ENCODE measurements at regions of chr1 and their contacts with region 1.

Region 1: DNA sequence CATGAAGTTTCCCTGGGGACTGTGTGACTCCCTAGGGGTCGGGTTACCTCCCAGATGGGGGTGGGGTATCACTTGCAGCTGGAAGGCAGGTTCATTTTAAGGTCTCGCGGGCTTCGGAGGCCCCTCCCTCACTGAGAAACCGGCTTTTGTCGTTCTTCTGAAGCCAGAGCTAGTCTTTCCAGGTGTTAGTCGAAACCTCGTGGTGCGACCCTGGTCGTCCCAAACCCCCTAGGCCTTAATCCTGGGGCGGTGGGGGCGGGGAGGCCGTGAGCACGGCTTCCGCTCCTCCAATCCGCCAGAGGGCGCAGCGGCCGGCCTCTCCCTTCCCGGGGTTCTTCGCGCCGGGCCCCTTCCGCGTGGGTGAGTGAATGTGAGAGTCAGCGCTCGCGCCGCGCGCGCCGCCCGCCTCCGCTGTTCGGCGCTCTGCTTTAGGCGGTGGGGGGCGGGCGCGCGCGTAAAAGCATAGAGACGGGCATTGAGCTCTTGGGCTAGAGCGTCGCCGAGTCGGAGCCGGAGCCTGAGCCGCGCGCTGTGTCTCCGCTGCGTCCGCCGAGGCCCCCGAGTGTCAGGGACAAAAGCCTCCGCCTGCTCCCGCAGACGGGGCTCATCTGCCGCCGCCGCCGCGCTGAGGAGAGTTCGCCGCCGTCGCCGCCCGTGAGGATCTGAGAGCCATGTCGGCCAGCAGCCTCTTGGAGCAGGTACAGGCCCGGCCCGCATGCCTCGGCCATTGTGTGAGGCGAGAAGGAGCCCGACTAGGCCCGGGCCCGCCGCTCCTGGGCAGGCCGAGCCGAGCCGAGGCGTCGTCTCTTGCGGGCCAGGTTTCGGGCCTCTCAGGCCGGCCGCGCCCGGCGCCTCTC is at the start of gene YTHDF2:
- DNase-seq: peak; percentile 96 to 99 (median 98)
- ATAC-seq: peak; percentile 92
- H3K4me3 ChIP-seq: peak within 1 kb of the TSS; percentile 89
- H3K4me3 Mint-ChIP-seq: peak within 1 kb of the TSS; percentile 97
- H3K27ac ChIP-seq: peak within 1 kb of the TSS; percentile 84 to 96
- H3K27ac Mint-ChIP-seq: peak within 1 kb of the TSS; percentile 96
- H3K4me1 ChIP-seq: peaks cover 42% of the 10 kb centered on the region
- H3K4me1 Mint-ChIP-seq: peaks cover 32% of the 10 kb centered on the region
- H3K27me3 ChIP-seq: no peaks in the 10 kb centered on the region
- H3K27me3 Mint-ChIP-seq: no peaks in the 10 kb centered on the region
- CTCF ChIP-seq: peak; percentile 80
- total RNA-seq, gene YTHDF2: 95.3 to 101 TPM

Region 2: GRCh38 chr1:27321813-27322577 is 1414.7 kb before region 1 on chr1 and contains the start of gene TMEM222:
- CTCF ChIA-PET with region 1: no interaction called
- POLR2A ChIA-PET with region 1: no interaction called
- intact Hi-C with region 1: loop called in 1 of 2 experiments (anchors 5 kb)
- DNase-seq: peak; percentile 95 to 99 (median 97)
- ATAC-seq: peak; percentile 93
- H3K4me3 ChIP-seq: peak within 1 kb of the TSS; percentile 95 to 99
- H3K4me3 Mint-ChIP-seq: peak within 1 kb of the TSS; percentile 98
- H3K27ac ChIP-seq: peak within 1 kb of the TSS; percentile 88 to 95
- H3K27ac Mint-ChIP-seq: peak within 1 kb of the TSS; percentile 97
- H3K4me1 ChIP-seq: peaks cover 40% of the 10 kb centered on the region
- H3K4me1 Mint-ChIP-seq: peaks cover 48% of the 10 kb centered on the region
- H3K27me3 ChIP-seq: no peaks in the 10 kb centered on the region
- H3K27me3 Mint-ChIP-seq: no peaks in the 10 kb centered on the region
- CTCF ChIP-seq: no peak
- total RNA-seq, gene TMEM222: 24.1 to 25.2 TPM

Region 3: DNA sequence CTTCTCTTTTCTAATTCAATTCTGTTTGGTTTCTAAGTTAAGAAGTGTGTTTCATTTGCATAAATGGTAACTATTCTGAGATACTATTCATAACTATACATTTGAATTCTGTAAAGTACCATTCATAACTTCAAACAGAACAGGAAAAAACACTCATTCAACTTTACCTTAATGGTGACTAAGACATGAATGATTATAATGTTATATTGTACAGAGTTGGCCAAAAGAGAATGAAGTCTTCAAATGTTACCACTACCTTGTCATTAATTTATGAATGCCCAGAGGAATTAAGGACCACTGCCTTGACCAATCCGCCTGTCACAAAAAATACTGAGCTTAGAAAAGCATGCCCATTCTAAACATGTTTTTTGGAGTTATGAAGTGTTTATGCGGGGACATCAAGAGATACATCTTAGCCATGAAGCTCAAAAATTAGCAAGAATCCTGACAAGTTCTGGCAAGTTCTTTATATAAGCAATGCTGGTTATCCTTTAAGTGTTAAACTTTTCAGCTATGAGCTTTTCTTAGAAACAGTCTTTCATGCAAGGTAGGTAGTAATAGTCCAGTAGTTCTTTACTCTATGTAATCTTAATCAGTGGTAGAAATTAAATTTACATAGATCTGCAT is 1254.6 kb before region 1 on chr1:
- CTCF ChIA-PET with region 1: no interaction called
- POLR2A ChIA-PET with region 1: no interaction called
- intact Hi-C with region 1: no loop called
- DNase-seq: no peak
- ATAC-seq: no peak
- H3K4me3 ChIP-seq: no peak overlapping the region
- H3K4me3 Mint-ChIP-seq: no peak overlapping the region
- H3K27ac ChIP-seq: no peak overlapping the region
- H3K27ac Mint-ChIP-seq: peak overlapping the region; percentile 75
- H3K4me1 ChIP-seq: peaks cover 15% of the 10 kb centered on the region
- H3K4me1 Mint-ChIP-seq: peaks cover 51% of the 10 kb centered on the region
- H3K27me3 ChIP-seq: no peaks in the 10 kb centered on the region
- H3K27me3 Mint-ChIP-seq: no peaks in the 10 kb centered on the region
- CTCF ChIP-seq: no peak

Region 4: GRCh38 chr1:28235755-28236655 is 500.7 kb before region 1 on chr1 and contains the start of gene ATP5IF1:
- CTCF ChIA-PET with region 1: no interaction called
- POLR2A ChIA-PET with region 1: no interaction called
- intact Hi-C with region 1: loop called in 1 of 2 experiments (anchors 5 kb)
- DNase-seq: peak; percentile 90 to 98 (median 94)
- ATAC-seq: peak; percentile 95
- H3K4me3 ChIP-seq: peak within 1 kb of the TSS; percentile 80 to 96
- H3K4me3 Mint-ChIP-seq: no peak within 1 kb of the TSS
- H3K27ac ChIP-seq: peak within 1 kb of the TSS; percentile 84 to 96
- H3K27ac Mint-ChIP-seq: no peak within 1 kb of the TSS
- H3K4me1 ChIP-seq: peaks cover 41% of the 10 kb centered on the region
- H3K4me1 Mint-ChIP-seq: peaks cover 21% of the 10 kb centered on the region
- H3K27me3 ChIP-seq: no peaks in the 10 kb centered on the region
- H3K27me3 Mint-ChIP-seq: no peaks in the 10 kb centered on the region
- CTCF ChIP-seq: no peak
- total RNA-seq, gene ATP5IF1: 66.1 to 69.3 TPM

Region 5: DNA sequence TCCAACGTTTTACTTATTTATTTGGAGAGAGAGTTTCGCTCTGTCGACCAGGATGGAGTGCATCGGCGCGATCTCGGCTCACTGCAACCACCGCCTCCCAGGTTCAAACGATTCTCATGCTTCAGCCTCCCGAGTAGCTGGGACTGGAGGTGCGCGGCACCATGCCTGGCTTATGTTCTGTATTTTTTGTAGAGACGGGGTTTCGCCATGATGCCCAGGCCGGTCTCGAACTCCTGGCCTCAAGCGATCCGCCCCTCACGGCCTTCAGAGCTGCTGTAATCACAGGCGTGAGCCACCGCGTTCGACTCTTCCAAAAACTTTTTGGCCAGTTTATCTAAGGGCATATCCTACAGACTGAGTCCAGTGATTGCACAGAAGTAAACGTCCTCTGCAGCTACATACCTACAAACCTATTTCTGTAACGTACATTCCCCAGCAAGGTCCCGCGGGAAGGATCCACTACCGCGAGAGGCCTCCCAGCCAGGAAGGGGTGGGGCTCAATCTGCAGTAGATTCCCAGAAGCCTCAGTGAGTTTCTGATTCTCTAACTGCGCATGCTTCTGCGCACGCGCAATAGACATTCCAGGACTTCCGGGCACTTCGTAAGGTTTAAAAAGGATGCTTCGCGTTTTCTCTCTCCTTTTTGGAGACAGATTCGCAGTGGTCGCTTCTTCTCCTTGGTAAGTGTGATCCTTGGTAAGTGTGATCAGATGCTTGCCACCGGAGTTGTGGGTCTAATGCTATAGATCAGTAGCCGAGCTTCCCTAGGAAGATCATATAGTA is 231.1 kb before region 1 on chr1 and contains the start of gene RCC1:
- CTCF ChIA-PET with region 1: no interaction called
- POLR2A ChIA-PET with region 1: interaction called, 3 read pairs
- intact Hi-C with region 1: loop called (anchors 1 to 2 kb)
- DNase-seq: peak; percentile 89 to 99 (median 94)
- ATAC-seq: peak; percentile 91
- H3K4me3 ChIP-seq: peak within 1 kb of the TSS; percentile 82 to 88
- H3K4me3 Mint-ChIP-seq: peak within 1 kb of the TSS; percentile 95
- H3K27ac ChIP-seq: peak within 1 kb of the TSS; percentile 77 to 85
- H3K27ac Mint-ChIP-seq: peak within 1 kb of the TSS; percentile 94
- H3K4me1 ChIP-seq: peaks cover 31% of the 10 kb centered on the region
- H3K4me1 Mint-ChIP-seq: peaks cover 45% of the 10 kb centered on the region
- H3K27me3 ChIP-seq: no peaks in the 10 kb centered on the region
- H3K27me3 Mint-ChIP-seq: no peaks in the 10 kb centered on the region
- CTCF ChIP-seq: no peak
- total RNA-seq, gene RCC1: 12.5 to 14.4 TPM

Region 6: GRCh38 chr1:28642847-28643635 is 93.6 kb before region 1 on chr1 and contains the start of gene TAF12:
- CTCF ChIA-PET with region 1: interaction called, 16 read pairs
- POLR2A ChIA-PET with region 1: interaction called, 53 read pairs
- intact Hi-C with region 1: loop called (anchors 1 kb)
- DNase-seq: peak; percentile 87 to 98 (median 91)
- ATAC-seq: peak; percentile 79
- H3K4me3 ChIP-seq: peak within 1 kb of the TSS; percentile 62 to 92
- H3K4me3 Mint-ChIP-seq: peak within 1 kb of the TSS; percentile 100
- H3K27ac ChIP-seq: peak within 1 kb of the TSS; percentile 88 to 90
- H3K27ac Mint-ChIP-seq: peak within 1 kb of the TSS; percentile 99
- H3K4me1 ChIP-seq: peaks cover 34% of the 10 kb centered on the region
- H3K4me1 Mint-ChIP-seq: peaks cover 54% of the 10 kb centered on the region
- H3K27me3 ChIP-seq: no peaks in the 10 kb centered on the region
- H3K27me3 Mint-ChIP-seq: no peaks in the 10 kb centered on the region
- CTCF ChIP-seq: peak; percentile 32
- total RNA-seq, gene TAF12: 7.7 to 8.5 TPM

Region 7: DNA sequence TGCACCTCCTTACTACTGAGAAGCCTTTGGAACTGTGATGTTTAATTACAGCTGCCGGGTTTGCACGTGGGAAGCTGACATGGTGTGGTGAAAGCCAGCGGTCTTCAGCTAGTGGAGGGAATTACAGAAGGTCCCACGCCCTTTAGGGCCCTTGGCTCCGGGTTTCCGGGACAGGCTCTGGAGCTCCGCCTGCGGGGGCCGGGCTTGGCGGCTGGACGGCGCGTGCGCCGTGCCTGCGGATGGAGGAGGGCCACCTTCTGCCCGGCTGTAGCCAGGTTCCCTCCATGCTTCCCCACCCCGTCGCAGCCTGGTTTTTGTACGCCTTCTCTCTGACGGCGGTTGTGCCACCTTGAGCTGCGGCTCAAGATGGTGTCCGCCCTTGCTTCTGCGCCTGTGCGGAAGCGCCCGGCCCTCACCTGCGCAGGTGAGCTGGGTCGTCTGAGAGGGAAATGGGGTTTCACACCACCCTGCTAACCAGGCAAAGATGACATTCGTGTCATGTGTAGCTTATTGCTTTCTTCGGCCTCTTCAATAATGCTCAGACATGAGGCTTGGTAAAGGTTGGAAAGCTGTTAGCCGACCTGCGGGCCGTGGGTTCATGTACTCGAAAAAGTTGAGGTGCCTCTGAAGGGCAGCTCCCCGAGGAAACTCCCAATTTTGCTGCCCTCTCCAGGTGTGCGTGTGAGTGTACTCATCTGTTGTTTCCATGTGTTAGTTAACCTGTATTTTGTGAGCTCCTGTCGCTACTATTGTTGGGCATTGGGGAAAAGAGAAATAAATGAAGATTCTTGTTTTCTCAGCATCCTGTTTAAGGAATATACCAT is 38.7 kb after region 1 on chr1:
- CTCF ChIA-PET with region 1: interaction called, 8 read pairs
- POLR2A ChIA-PET with region 1: interaction called, 10 read pairs
- intact Hi-C with region 1: loop called in 1 of 2 experiments (anchors 2 kb)
- DNase-seq: peak; percentile 47 to 86 (median 69)
- ATAC-seq: peak; percentile 92
- H3K4me3 ChIP-seq: peak overlapping the region; percentile 48 to 56
- H3K4me3 Mint-ChIP-seq: peak overlapping the region; percentile 82
- H3K27ac ChIP-seq: peak overlapping the region; percentile 54 to 58
- H3K27ac Mint-ChIP-seq: peak overlapping the region; percentile 91
- H3K4me1 ChIP-seq: peaks cover 13% of the 10 kb centered on the region
- H3K4me1 Mint-ChIP-seq: peaks cover 12% of the 10 kb centered on the region
- H3K27me3 ChIP-seq: no peaks in the 10 kb centered on the region
- H3K27me3 Mint-ChIP-seq: no peaks in the 10 kb centered on the region
- CTCF ChIP-seq: no peak

Region 8: DNA sequence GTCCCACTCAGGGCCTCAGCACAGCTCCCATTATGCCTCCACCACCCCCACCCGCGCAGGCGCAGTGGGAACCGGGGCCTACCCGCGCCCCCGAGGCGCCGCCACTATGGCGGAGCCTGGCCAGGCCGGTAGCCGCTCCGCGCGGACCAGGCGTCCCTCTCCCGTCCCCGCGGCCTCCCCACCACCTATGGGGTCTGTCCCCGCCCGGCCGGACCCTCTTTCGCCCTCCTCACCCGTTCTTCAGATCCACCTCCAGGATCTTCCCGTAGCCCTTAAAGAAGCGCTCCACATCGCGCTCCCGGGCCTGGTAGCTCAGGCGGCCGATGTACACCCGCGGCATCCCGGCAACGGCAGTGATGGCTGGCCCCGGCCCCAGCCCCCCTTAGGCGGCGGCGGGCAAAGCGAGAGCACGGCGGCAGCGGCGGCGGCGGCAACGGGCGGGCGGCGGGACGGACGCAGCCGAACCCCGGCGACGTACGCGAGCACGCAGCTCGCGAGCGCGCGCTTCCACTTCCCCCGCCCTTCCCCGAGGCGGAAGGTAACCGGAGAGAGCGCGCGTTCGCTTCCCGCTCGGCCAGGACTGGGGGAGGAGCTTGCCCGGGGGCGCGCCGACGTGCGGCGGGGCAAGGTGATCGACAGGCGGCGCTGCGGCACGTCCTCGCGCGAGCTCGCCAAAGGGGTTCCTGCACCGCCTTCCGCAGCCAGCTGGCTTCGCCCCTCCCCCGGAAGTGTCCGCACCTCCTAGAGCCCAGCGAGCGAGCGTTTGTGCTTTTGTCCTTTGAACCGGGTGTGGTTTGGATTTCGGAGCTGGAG is 444.9 kb after region 1 on chr1 and contains the start of gene SRSF4:
- CTCF ChIA-PET with region 1: interaction called, 3 read pairs
- POLR2A ChIA-PET with region 1: interaction called, 19 read pairs
- intact Hi-C with region 1: loop called (anchors 1 kb)
- DNase-seq: peak; percentile 98 to 99 (median 99)
- ATAC-seq: peak; percentile 92
- H3K4me3 ChIP-seq: peak within 1 kb of the TSS; percentile 89 to 98
- H3K4me3 Mint-ChIP-seq: peak within 1 kb of the TSS; percentile 94
- H3K27ac ChIP-seq: peak within 1 kb of the TSS; percentile 94 to 100
- H3K27ac Mint-ChIP-seq: peak within 1 kb of the TSS; percentile 94
- H3K4me1 ChIP-seq: peaks cover 37% of the 10 kb centered on the region
- H3K4me1 Mint-ChIP-seq: peaks cover 48% of the 10 kb centered on the region
- H3K27me3 ChIP-seq: no peaks in the 10 kb centered on the region
- H3K27me3 Mint-ChIP-seq: no peaks in the 10 kb centered on the region
- CTCF ChIP-seq: peak; percentile 68
- total RNA-seq, gene SRSF4: 83.6 to 92.2 TPM